ENCODE measurements at regions of chr4 and their contacts with region 1.

Region 1: GRCh38 chr4:159175085-159175988 is 72.5 kb downstream of the RAPGEF2 start:
- DNase-seq: peak; percentile 94
- ATAC-seq: peak; percentile 88
- H3K4me3 ChIP-seq: peak overlapping the region; percentile 35; the same call in 1 of the 2 replicates
- H3K27ac ChIP-seq: peak overlapping the region; percentile 36; the same call in 1 of the 2 replicates
- H3K4me1 ChIP-seq: peaks cover 15% of the 10 kb centered on the region
- H3K27me3 ChIP-seq: no peaks in the 10 kb centered on the region
- CTCF ChIP-seq: peak; percentile 90
- POLR2A ChIP-seq: peak; percentile 43; the same call in 1 of the 2 replicates
- RAD21 ChIP-seq: peak; percentile 96

Region 2: DNA sequence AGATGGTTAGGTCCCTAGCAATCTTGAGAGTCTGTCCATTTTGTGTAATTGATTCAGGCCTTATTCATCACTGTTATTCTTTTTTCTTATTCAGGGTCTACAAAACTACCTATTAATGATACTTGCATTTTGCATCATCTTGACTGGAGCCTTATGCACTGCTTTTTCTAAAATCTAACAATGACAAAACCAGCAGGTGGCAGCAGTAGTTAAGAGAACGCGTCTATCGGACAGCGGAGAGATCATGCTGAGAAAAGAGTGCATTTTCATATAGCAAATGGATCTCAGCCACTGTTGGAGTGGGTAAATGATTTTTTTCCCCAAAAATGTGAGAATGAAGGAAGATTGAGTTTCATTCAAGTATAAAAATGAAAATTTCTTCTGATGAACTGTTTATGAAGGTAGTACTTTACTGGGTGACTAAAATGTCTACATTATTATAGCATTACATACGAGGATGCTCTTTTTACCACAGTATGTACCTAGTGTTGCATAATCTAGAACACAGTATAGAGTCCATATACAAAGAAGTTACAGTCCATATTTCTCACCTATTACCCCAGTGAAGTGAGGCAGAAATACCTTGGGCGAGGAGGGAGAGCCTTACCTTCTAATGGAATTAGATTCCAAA is 921.9 kb before region 1 on chr4:
- CTCF ChIA-PET with region 1: no interaction called
- POLR2A ChIA-PET with region 1: no interaction called
- dilution Hi-C with region 1: no loop called
- in situ Hi-C with region 1: loop called (anchors 25 kb)
- intact Hi-C with region 1: no loop called
- DNase-seq: peak; percentile 63
- ATAC-seq: peak; percentile 88
- H3K4me3 ChIP-seq: no peak overlapping the region
- H3K27ac ChIP-seq: no peak overlapping the region
- H3K4me1 ChIP-seq: no peaks in the 10 kb centered on the region
- H3K27me3 ChIP-seq: peaks cover 2% of the 10 kb centered on the region; the same call in 1 of the 2 replicates
- CTCF ChIP-seq: peak; percentile 71
- POLR2A ChIP-seq: no peak
- RAD21 ChIP-seq: peak; percentile 73

Region 3: DNA sequence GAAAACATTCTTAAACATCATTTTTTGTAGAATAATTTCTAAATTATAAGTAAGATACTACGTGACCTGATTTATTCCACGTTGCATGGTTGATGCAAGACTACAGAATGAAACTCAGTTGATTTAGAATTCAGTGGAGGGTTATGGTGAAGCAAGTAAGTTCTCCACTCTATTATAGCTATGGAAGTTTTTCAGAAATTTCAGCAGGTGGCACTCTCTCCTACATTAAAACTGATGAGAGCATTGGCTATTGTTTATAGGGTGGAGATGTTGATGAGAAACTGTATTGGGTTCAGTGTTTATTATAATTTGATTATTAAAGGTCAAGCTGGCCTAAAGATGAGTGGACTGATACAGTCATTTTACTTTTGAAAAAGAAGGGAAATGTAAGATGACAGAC is 318.5 kb before region 1 on chr4:
- CTCF ChIA-PET with region 1: interaction called, 5 read pairs
- POLR2A ChIA-PET with region 1: no interaction called
- dilution Hi-C with region 1: no loop called
- in situ Hi-C with region 1: loop called (anchors 5 kb)
- intact Hi-C with region 1: loop called (anchors 1 kb)
- DNase-seq: peak; percentile 68
- ATAC-seq: peak; percentile 92
- H3K4me3 ChIP-seq: no peak overlapping the region
- H3K27ac ChIP-seq: no peak overlapping the region
- H3K4me1 ChIP-seq: no peaks in the 10 kb centered on the region
- H3K27me3 ChIP-seq: no peaks in the 10 kb centered on the region
- CTCF ChIP-seq: peak; percentile 73
- POLR2A ChIP-seq: no peak
- RAD21 ChIP-seq: peak; percentile 79

Region 4: DNA sequence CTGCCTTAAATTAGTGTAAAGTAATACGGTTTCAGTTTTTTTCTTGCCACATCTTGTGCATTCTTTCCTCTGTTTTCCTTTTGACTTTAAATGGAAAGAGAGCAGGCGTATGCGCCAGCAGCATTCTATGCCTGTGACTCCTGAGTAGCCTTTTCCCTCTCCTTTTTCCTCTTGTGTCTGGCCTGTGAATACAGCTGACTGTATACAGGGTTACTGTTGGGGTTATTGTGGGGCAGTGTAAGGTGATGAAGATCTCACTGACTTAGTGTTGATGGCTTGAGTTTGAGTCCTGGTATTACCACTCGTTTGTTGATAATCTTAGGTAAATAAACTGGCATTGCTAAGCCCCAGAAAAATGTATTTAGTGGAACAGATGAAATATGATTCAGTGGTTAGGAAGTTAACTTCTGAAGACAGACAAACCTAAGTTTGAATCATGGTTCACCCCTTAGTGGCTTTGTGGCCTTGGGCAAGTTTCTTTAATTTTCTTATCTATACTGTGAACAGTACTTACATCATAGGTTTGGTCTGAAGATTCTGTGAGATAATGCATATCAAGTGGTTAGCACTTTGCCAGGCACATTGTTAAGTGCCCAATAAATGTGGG is 301.4 kb before region 1 on chr4:
- CTCF ChIA-PET with region 1: no interaction called
- POLR2A ChIA-PET with region 1: no interaction called
- dilution Hi-C with region 1: no loop called
- in situ Hi-C with region 1: no loop called
- intact Hi-C with region 1: loop called (anchors 1 kb)
- DNase-seq: peak; percentile 96
- ATAC-seq: peak; percentile 97
- H3K4me3 ChIP-seq: no peak overlapping the region
- H3K27ac ChIP-seq: no peak overlapping the region
- H3K4me1 ChIP-seq: peaks cover 10% of the 10 kb centered on the region
- H3K27me3 ChIP-seq: no peaks in the 10 kb centered on the region
- CTCF ChIP-seq: no peak
- POLR2A ChIP-seq: no peak
- RAD21 ChIP-seq: no peak; the same call in 1 of the 2 replicates

Region 5: DNA sequence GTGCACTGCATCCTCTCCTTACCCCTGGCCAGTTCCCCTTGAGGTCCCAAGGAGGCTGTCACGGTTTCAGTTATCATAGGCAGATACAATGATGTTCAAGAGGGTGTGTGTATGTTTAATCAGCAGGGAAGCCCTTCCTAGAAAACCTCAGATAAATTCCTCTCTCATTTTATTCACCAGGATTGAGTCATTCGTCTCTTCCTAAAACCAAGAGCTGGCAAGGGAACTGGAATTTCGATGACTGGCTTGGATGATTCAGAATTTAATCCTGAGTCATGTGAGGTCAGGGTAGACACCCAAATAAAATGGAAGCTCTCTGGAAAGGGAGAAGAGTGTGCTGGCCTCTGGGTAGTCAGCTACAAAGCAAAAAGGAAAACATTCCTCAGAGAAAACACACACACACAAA is 178.7 kb before region 1 on chr4:
- CTCF ChIA-PET with region 1: interaction called, 5 read pairs
- POLR2A ChIA-PET with region 1: no interaction called
- dilution Hi-C with region 1: no loop called
- in situ Hi-C with region 1: no loop called
- intact Hi-C with region 1: loop called (anchors 2 kb)
- DNase-seq: peak; percentile 97
- ATAC-seq: peak; percentile 99
- H3K4me3 ChIP-seq: no peak overlapping the region
- H3K27ac ChIP-seq: no peak overlapping the region
- H3K4me1 ChIP-seq: peaks cover 2% of the 10 kb centered on the region
- H3K27me3 ChIP-seq: no peaks in the 10 kb centered on the region
- CTCF ChIP-seq: no peak
- POLR2A ChIP-seq: no peak
- RAD21 ChIP-seq: peak; percentile 29; the same call in 1 of the 2 replicates

Region 6: GRCh38 chr4:159102622-159103383 is 72.5 kb before region 1 on chr4 and contains the start of gene RAPGEF2:
- CTCF ChIA-PET with region 1: no interaction called
- POLR2A ChIA-PET with region 1: no interaction called
- dilution Hi-C with region 1: no loop called
- in situ Hi-C with region 1: no loop called
- intact Hi-C with region 1: loop called (anchors 1 kb)
- DNase-seq: peak; percentile 91
- ATAC-seq: peak; percentile 87
- H3K4me3 ChIP-seq: peak within 1 kb of the TSS; percentile 88
- H3K27ac ChIP-seq: peak within 1 kb of the TSS; percentile 40
- H3K4me1 ChIP-seq: peaks cover 2% of the 10 kb centered on the region
- H3K27me3 ChIP-seq: peaks cover 14% of the 10 kb centered on the region
- CTCF ChIP-seq: no peak
- POLR2A ChIP-seq: peak; percentile 93
- RAD21 ChIP-seq: peak; percentile 12; the same call in 1 of the 2 replicates
- total RNA-seq, gene RAPGEF2: 109 and 126 TPM in 2 replicates

Region 7: GRCh38 chr4:159206427-159206871 is 31.1 kb after region 1 on chr4:
- CTCF ChIA-PET with region 1: no interaction called
- POLR2A ChIA-PET with region 1: interaction called, 3 read pairs
- dilution Hi-C with region 1: no loop called
- in situ Hi-C with region 1: no loop called
- intact Hi-C with region 1: loop called (anchors 1 kb)
- DNase-seq: peak; percentile 76
- ATAC-seq: peak; percentile 81
- H3K4me3 ChIP-seq: no peak overlapping the region
- H3K27ac ChIP-seq: no peak overlapping the region
- H3K4me1 ChIP-seq: peaks cover 3% of the 10 kb centered on the region
- H3K27me3 ChIP-seq: no peaks in the 10 kb centered on the region
- CTCF ChIP-seq: no peak
- POLR2A ChIP-seq: no peak
- RAD21 ChIP-seq: no peak

Measured in IMR-90 (cell line).